K562 (cell line): ENCODE measurements at regions of chr3 and their contacts with region 1.

Region 1: DNA sequence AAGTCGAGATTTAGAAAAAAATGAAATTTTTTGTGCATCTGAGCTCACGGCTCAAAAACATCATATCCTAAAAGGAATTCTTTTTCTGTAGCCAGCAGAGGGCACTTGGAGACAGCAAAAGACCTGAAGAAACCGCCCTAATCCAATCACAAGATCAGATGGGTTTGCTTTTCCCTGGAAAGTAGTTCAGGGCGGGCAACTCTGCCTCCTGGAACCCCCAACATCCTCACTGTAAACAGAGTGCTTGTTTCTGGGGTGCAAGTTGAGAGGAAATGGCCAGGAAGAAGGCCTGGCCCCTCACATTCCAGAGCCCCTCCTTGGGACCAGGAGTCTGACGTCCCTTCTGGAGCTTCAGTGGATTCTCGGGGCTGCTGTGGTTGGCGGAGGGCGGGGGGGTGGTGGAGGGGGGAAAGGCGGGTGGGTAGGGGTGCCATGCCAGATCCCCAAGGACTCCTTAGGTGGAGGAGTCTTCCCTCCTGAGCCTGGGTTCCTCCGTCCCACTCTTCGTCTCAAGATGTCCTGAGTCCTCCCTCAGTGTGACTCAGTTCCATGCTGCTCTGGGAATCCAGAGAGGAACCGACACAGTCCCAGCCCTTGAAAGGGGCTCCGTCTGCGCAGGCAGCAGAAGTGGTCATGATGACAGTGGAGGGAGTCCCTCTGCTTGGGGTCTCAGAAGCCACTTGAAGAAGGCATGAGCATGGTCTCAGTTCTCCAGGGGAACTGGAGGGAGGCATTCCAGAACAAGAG is 35.9 kb downstream of the CCK start:
- DNase-seq: peak; percentile 41 to 59 (median 52)
- ATAC-seq: peak; percentile 66
- H3K4me3 ChIP-seq: no peak overlapping the region
- H3K27ac ChIP-seq: no peak overlapping the region
- H3K4me1 ChIP-seq: peaks cover 0 to 4% of the 10 kb centered on the region in 2 experiments; a peak in 2 of 5 replicates
- H3K27me3 ChIP-seq: peaks cover 7 to 28% of the 10 kb centered on the region in 2 experiments; a peak in 4 of 5 replicates
- CTCF ChIP-seq: peak; percentile 60 to 80 (median 68)
- EP300 ChIP-seq: no peak
- POLR2A ChIP-seq: no peak
- RAD21 ChIP-seq: peak; percentile 80 to 89

Region 2: GRCh38 chr3:42134877-42135464 is 95.1 kb before region 1 on chr3:
- CTCF ChIA-PET with region 1: no interaction called
- POLR2A ChIA-PET with region 1: no interaction called
- in situ Hi-C with region 1: no loop called
- intact Hi-C with region 1: no loop called
- DNase-seq: no peak
- ATAC-seq: no peak
- H3K4me3 ChIP-seq: no peak overlapping the region
- H3K27ac ChIP-seq: no peak overlapping the region
- H3K4me1 ChIP-seq: no peaks in the 10 kb centered on the region
- H3K27me3 ChIP-seq: no peaks in the 10 kb centered on the region
- CTCF ChIP-seq: no peak
- EP300 ChIP-seq: no peak
- POLR2A ChIP-seq: no peak
- RAD21 ChIP-seq: no peak

Region 3: DNA sequence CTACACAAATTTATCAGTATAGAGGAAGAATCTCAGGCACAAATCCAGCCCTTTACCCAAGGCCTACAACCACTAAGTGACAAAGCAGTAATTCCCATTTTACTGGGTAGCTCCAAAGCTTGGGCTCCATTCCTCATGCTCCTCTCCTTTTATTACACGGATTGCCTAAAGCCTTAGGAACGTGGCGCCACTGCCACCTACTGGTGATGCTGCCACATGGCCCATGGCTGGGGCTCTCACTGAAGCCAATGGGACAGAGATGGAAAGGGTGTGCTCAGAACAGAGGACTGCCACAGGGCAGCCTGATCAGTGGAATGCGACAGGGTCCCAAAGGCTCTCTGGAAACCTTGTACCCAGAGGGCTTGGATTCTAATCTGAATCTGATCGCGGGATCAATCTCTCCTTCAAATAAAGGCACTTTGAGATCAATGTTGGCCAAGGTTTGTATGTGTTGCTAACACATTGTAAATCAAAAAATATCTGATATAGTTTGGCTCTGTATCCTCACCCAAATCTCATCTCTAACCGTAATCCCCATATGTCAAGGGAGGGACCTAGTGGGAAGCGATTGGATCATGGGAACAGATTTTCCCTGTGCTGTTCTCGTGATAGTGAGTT is 213.8 kb after region 1 on chr3:
- CTCF ChIA-PET with region 1: interaction called, 32 read pairs
- POLR2A ChIA-PET with region 1: no interaction called
- in situ Hi-C with region 1: loop called (anchors 10 kb)
- intact Hi-C with region 1: loop called (anchors 1 kb)
- DNase-seq: peak; percentile 84 to 90 (median 88)
- ATAC-seq: peak; percentile 99
- H3K4me3 ChIP-seq: no peak overlapping the region
- H3K27ac ChIP-seq: no peak overlapping the region
- H3K4me1 ChIP-seq: no peaks in the 10 kb centered on the region
- H3K27me3 ChIP-seq: peaks cover 8 to 24% of the 10 kb centered on the region in 2 experiments
- CTCF ChIP-seq: peak; percentile 94 to 98 (median 97)
- EP300 ChIP-seq: no peak
- POLR2A ChIP-seq: no peak
- RAD21 ChIP-seq: peak; percentile 94 to 97

Region 4: GRCh38 chr3:42547401-42547945 is 317.4 kb after region 1 on chr3:
- CTCF ChIA-PET with region 1: interaction called, 6 read pairs
- POLR2A ChIA-PET with region 1: interaction called, 3 read pairs
- in situ Hi-C with region 1: no loop called
- intact Hi-C with region 1: loop called (anchors 5 kb)
- DNase-seq: peak; percentile 81 to 84 (median 82)
- ATAC-seq: peak; percentile 94
- H3K4me3 ChIP-seq: no peak overlapping the region
- H3K27ac ChIP-seq: no peak overlapping the region
- H3K4me1 ChIP-seq: no peaks in the 10 kb centered on the region
- H3K27me3 ChIP-seq: peaks cover 0 to 12% of the 10 kb centered on the region in 2 experiments; a peak in 1 of 5 replicates
- CTCF ChIP-seq: peak; percentile 87 to 99 (median 92)
- EP300 ChIP-seq: no peak
- POLR2A ChIP-seq: no peak; the same call in 1 of the 2 replicates
- RAD21 ChIP-seq: peak; percentile 34 to 61; a peak in 3 of 4 replicates

Region 5: GRCh38 chr3:42755681-42756578 is 525.8 kb after region 1 on chr3:
- CTCF ChIA-PET with region 1: no interaction called
- POLR2A ChIA-PET with region 1: no interaction called
- in situ Hi-C with region 1: no loop called
- intact Hi-C with region 1: loop called (anchors 10 kb)
- DNase-seq: peak; percentile 42 to 71 (median 52)
- ATAC-seq: peak; percentile 97
- H3K4me3 ChIP-seq: no peak overlapping the region
- H3K27ac ChIP-seq: no peak overlapping the region
- H3K4me1 ChIP-seq: no peaks in the 10 kb centered on the region
- H3K27me3 ChIP-seq: peaks cover 15 to 45% of the 10 kb centered on the region in 2 experiments
- CTCF ChIP-seq: peak; percentile 76 to 80 (median 77)
- EP300 ChIP-seq: no peak
- POLR2A ChIP-seq: no peak
- RAD21 ChIP-seq: peak; percentile 54 to 68